Right cardiac atrium (tissue), 5 donors: ENCODE measurements at regions of chr5 and their contacts with region 1.

Region 1: GRCh38 chr5:36507332-36507952 is 99.0 kb upstream of the SLC1A3 start:
- DNase-seq: peak; percentile 73 to 91 (median 85)
- ATAC-seq: peak; percentile 59 to 65
- H3K4me3 ChIP-seq: no peak overlapping the region
- H3K27ac ChIP-seq: no peak overlapping the region
- H3K4me1 ChIP-seq: no peaks in the 10 kb centered on the region
- H3K27me3 ChIP-seq: no peaks in the 10 kb centered on the region

Region 2: DNA sequence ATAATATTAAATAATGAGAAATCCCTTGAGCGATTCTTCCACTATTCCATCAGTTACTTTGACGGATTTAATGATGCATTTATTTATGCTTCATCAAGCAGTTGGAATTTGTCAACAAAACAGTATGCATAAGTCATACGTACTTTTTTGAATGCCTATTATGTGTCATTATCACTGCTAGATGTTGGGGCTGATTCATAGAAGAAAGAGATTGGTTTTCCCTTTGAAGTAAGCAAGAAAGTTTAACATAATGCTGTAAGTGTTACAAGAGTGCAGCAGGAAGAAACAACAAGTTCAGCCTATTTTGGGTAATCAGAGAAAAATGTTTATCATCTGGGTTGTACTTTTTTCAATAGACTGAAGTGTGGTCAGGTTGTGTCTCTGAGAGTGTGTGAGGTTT is 84.5 kb before region 1 on chr5:
- intact Hi-C with region 1: loop called in 3 of 4 experiments (anchors 5 to 10 kb)
- DNase-seq: no peak
- ATAC-seq: no peak
- H3K4me3 ChIP-seq: no peak overlapping the region
- H3K27ac ChIP-seq: no peak overlapping the region
- H3K4me1 ChIP-seq: no peaks in the 10 kb centered on the region
- H3K27me3 ChIP-seq: no peaks in the 10 kb centered on the region

Region 3: GRCh38 chr5:36836831-36837230 is 329.4 kb after region 1 on chr5:
- intact Hi-C with region 1: no loop called
- DNase-seq: no peak
- ATAC-seq: no peak
- H3K4me3 ChIP-seq: no peak overlapping the region
- H3K27ac ChIP-seq: no peak overlapping the region
- H3K4me1 ChIP-seq: no peaks in the 10 kb centered on the region
- H3K27me3 ChIP-seq: no peaks in the 10 kb centered on the region